H1 (cell line): ENCODE measurements at regions of chr16 and their contacts with region 1.

Region 1: DNA sequence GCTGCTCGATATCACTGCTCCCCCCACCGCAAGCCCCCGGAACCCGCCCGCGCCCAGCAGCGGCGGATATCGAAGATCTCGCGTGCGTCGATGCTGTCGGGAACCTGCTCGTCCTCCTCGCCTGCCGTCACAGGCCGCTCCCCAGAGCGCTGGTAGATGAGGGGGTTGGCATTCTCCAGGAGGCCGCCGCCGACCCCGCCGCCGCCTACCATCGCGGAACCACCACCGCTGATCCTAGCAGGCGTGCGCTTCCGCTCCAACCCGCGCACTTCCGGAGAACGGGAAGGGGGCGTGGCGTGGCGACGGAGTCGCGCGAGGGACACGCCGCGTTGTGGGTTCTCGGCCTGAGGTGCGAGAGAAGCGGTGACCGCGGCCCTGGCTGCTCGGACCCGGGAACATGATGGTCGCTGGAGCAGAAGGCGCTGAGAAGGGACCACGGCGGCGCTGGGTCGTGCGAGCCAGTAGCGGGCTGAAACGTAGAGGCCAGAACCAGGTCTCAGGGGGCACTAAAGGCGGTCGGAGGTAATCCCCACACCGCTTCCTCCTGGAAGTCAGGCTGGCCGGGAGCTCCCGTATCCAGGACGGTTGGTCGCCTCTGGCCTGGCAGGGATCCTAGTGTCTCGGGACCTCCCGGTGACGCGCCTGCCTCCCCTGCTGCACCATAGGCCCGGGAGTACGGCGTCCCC is at the start of gene CIAO2B:
- DNase-seq: peak in 1 of 2 experiments; percentile 83
- H3K4me3 ChIP-seq: peak within 1 kb of the TSS; percentile 79 to 92 (median 90)
- H3K27ac ChIP-seq: no peak within 1 kb of the TSS
- H3K4me1 ChIP-seq: peaks cover 0 to 9% (median 5%) of the 10 kb centered on the region in 4 experiments; a peak in 4 of 7 replicates
- H3K27me3 ChIP-seq: peaks cover 0 to 9% (median 6%) of the 10 kb centered on the region in 4 experiments; a peak in 4 of 7 replicates
- CTCF ChIP-seq: no peak
- EP300 ChIP-seq: no peak
- POLR2A ChIP-seq: peak in 1 of 2 experiments; percentile 51; a peak in 2 of 3 replicates
- RAD21 ChIP-seq: no peak
- total RNA-seq, gene CIAO2B: 65.6 and 71.3 TPM in 2 replicates

Region 2: DNA sequence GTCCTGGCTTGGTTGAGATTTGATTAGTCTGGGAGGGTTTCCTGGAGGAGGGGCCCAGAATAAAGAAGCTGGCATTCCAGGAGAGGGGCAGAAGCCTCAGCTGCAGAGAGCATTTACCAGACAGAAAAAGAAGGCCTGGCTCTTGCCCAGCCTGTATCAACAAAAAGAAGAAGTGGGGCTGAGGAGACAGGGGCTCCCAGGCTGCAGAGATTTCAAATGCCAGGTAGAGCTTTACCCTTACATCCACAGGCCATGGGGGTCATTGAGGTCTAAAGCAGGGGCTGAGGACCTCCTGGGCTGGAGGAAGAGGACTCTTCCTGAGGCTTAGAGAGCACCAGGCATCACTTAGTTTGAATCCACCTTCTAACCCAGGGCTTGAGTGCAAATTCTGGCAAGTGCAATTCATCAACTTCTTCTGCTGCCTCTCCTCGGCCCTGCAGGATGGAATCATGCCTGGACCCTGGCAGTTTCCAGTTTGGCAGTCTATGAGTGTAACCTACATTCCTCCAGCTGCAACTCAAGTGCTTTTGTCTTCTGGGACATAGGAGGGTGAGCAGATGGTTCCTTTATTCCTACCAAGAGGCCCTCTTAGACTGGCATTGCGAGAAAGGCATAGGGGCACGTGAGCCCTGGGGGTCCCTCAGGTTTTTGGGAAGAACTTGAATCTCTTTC is 74.8 kb before region 1 on chr16:
- CTCF ChIA-PET with region 1: no interaction called
- POLR2A ChIA-PET with region 1: no interaction called
- DNase-seq: no peak
- H3K4me3 ChIP-seq: no peak overlapping the region
- H3K27ac ChIP-seq: no peak overlapping the region
- H3K4me1 ChIP-seq: no peaks in the 10 kb centered on the region
- H3K27me3 ChIP-seq: no peaks in the 10 kb centered on the region
- CTCF ChIP-seq: no peak
- EP300 ChIP-seq: no peak
- POLR2A ChIP-seq: no peak
- RAD21 ChIP-seq: no peak

Region 3: DNA sequence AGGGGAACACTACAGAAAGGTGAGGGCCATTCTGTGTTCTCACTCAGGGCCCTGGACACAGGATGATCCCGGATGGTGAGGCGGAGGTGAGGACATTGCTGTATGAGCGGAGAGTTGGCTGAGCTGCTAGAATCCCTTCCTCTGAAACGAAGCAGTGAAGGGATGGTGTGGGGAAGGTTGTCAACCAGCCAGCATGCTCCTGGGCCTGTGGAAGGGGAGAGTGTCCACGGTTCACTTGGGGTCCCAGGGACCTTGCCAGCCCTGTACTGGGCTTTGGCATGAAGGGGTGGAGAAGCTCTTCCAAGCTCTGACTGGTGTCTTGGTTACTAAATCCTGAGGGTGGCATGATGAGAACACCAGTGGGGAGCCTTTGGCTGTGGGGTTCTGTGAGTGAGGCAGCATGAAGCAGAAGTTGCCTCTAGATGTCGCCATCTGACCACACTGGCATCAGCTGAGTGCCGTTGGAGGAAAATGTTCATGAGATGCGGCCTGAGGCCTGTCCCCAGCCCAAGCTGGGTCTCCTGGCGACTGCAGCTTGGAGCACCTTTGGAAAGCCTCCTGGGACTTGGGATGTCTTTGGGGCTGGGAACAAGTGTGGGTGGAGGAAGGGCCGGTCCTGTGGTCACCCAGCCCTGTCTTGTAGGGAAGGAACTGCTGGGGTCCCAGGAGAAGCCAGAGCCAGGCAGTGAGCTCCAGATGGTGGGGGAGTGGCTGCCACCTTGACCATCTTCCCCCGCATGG is 39.2 kb before region 1 on chr16:
- CTCF ChIA-PET with region 1: interaction called, 1,009 read pairs
- POLR2A ChIA-PET with region 1: interaction called, 6 read pairs
- DNase-seq: peak in 1 of 2 experiments; percentile 72
- H3K4me3 ChIP-seq: no peak overlapping the region
- H3K27ac ChIP-seq: no peak overlapping the region
- H3K4me1 ChIP-seq: peaks cover 0 to 3% (median 1%) of the 10 kb centered on the region in 4 experiments; a peak in 3 of 7 replicates
- H3K27me3 ChIP-seq: no peaks in the 10 kb centered on the region; a peak in 1 of 7 replicates
- CTCF ChIP-seq: peak; percentile 85 to 91 (median 91)
- EP300 ChIP-seq: no peak
- POLR2A ChIP-seq: no peak
- RAD21 ChIP-seq: peak; percentile 95 to 96

Region 4: GRCh38 chr16:66905633-66906539 is 28.4 kb before region 1 on chr16:
- CTCF ChIA-PET with region 1: interaction called, 1,009 read pairs
- POLR2A ChIA-PET with region 1: interaction called, 3 read pairs
- DNase-seq: no peak
- H3K4me3 ChIP-seq: no peak overlapping the region
- H3K27ac ChIP-seq: no peak overlapping the region
- H3K4me1 ChIP-seq: peaks cover 0 to 5% (median 0%) of the 10 kb centered on the region in 4 experiments; a peak in 2 of 7 replicates
- H3K27me3 ChIP-seq: no peaks in the 10 kb centered on the region; a peak in 1 of 7 replicates
- CTCF ChIP-seq: no peak
- EP300 ChIP-seq: no peak
- POLR2A ChIP-seq: no peak
- RAD21 ChIP-seq: no peak

Region 5: GRCh38 chr16:66911112-66911511 is 23.2 kb before region 1 on chr16:
- CTCF ChIA-PET with region 1: interaction called, 1,009 read pairs
- POLR2A ChIA-PET with region 1: interaction called, 3 read pairs
- DNase-seq: no peak
- H3K4me3 ChIP-seq: no peak overlapping the region
- H3K27ac ChIP-seq: no peak overlapping the region
- H3K4me1 ChIP-seq: peaks cover 0 to 3% (median 0%) of the 10 kb centered on the region in 4 experiments; a peak in 1 of 7 replicates
- H3K27me3 ChIP-seq: no peaks in the 10 kb centered on the region; a peak in 3 of 7 replicates
- CTCF ChIP-seq: no peak
- EP300 ChIP-seq: no peak
- POLR2A ChIP-seq: no peak
- RAD21 ChIP-seq: no peak

Region 6: DNA sequence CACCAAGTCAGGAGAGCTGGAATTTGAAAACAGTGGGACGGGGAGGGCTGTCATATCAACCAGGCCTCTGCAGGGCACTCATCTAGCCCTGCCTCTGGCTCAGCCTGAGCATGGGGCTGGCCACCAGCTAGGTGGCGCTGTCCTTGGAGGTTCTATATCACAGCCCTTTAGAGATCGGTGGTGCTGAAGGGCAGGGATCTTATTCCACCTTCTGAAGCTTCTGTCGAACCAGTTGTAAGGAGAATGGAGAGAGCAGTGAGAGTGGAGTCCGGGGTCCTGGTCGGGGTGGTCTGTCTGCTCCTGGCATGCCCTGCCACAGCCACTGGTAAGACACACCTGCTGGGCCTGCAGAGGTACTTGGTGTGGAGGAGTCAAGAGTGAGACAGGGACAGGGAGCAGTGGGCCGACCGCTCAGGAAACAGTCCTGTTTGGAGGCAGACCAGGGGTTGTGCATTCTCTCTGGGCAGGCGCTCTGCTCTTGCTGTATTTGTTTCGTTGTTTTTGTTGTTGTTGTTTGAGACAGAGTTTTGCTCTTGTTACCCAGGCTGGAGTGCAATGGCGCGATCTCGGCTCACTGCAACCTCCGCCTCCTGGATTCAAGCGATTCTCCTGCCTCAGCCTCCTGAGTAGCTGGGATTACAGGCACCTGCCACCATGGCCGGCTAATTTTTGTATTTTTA is 26.9 kb after region 1 on chr16 and contains the start of gene CES3:
- CTCF ChIA-PET with region 1: interaction called, 10 read pairs
- POLR2A ChIA-PET with region 1: no interaction called
- DNase-seq: peak; percentile 79 to 87
- H3K4me3 ChIP-seq: peak within 1 kb of the TSS; percentile 8 to 50 (median 24); a peak in 6 of 8 replicates
- H3K27ac ChIP-seq: no peak within 1 kb of the TSS
- H3K4me1 ChIP-seq: peaks cover 0 to 3% (median under 1%) of the 10 kb centered on the region in 4 experiments; a peak in 3 of 7 replicates
- H3K27me3 ChIP-seq: no peaks in the 10 kb centered on the region
- CTCF ChIP-seq: peak; percentile 97 to 99 (median 99)
- EP300 ChIP-seq: no peak
- POLR2A ChIP-seq: peak in 1 of 2 experiments; percentile 37; a peak in 1 of 3 replicates
- RAD21 ChIP-seq: peak; percentile 33 to 48; a peak in 3 of 4 replicates
- total RNA-seq, gene CES3: 1.6 and 1.7 TPM in 2 replicates

Region 7: GRCh38 chr16:66984892-66985311 is 50.6 kb after region 1 on chr16:
- CTCF ChIA-PET with region 1: no interaction called
- POLR2A ChIA-PET with region 1: no interaction called
- DNase-seq: no peak
- H3K4me3 ChIP-seq: no peak overlapping the region
- H3K27ac ChIP-seq: no peak overlapping the region
- H3K4me1 ChIP-seq: no peaks in the 10 kb centered on the region
- H3K27me3 ChIP-seq: no peaks in the 10 kb centered on the region
- CTCF ChIP-seq: no peak
- EP300 ChIP-seq: no peak
- POLR2A ChIP-seq: no peak
- RAD21 ChIP-seq: no peak

Region 8: DNA sequence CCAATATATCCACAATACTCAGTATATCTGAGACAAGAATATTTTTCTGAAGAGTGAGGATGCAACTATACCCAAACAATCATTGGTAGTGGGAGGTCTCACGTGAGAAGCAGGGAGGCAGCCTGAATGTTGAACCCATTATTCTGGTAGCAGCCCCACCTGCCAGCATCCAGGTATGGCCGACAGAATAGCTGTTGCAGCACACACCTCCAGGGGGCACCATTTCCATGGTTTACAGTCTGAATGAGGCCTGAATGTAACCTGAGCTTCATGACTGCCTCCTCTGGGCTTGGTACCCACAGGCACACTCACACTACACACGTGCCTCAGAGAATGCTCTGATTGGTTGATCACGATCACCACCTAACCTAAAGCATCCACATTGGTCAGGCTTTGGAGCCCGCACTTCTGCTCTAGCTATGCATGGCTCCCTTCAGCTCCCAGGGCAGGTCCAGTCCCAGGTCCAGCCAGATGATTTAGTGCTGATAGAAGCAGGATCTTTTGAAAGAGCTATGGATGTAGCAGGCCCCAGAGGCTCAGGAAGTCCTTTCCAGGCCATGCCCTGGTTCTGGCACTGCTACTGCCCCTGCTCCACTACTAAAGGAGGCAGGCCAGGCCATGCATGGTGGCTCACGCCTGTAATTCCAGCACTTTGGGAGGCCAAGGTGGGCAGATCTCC is 83.7 kb after region 1 on chr16:
- CTCF ChIA-PET with region 1: no interaction called
- POLR2A ChIA-PET with region 1: no interaction called
- DNase-seq: peak; percentile 78 to 96
- H3K4me3 ChIP-seq: no peak overlapping the region
- H3K27ac ChIP-seq: no peak overlapping the region
- H3K4me1 ChIP-seq: peaks cover 0 to 6% (median 4%) of the 10 kb centered on the region in 4 experiments; a peak in 4 of 7 replicates
- H3K27me3 ChIP-seq: peaks cover 16 to 35% (median 26%) of the 10 kb centered on the region in 4 experiments
- CTCF ChIP-seq: peak; percentile 82 to 99 (median 89)
- EP300 ChIP-seq: no peak
- POLR2A ChIP-seq: no peak
- RAD21 ChIP-seq: peak; percentile 89 to 91